Prostate gland (tissue), 2 donors: ENCODE measurements at regions of chr1 and their contacts with region 1.

Region 1: GRCh38 chr1:77683160-77684148 is 996 bp upstream of the ZZZ3 start:
- DNase-seq: peak; percentile 90
- H3K4me3 ChIP-seq: peak overlapping the region; percentile 59 to 86
- H3K27ac ChIP-seq: peak overlapping the region; percentile 84 to 94
- H3K4me1 ChIP-seq: no peaks in the 10 kb centered on the region
- H3K27me3 ChIP-seq: no peaks in the 10 kb centered on the region
- CTCF ChIP-seq: peak; percentile 66 to 96 (median 86)
- POLR2A ChIP-seq: peak; percentile 41

Region 2: GRCh38 chr1:77533660-77534305 is 149.7 kb before region 1 on chr1:
- intact Hi-C with region 1: loop called (anchors 10 kb)
- DNase-seq: peak; percentile 44
- H3K4me3 ChIP-seq: no peak overlapping the region
- H3K27ac ChIP-seq: no peak overlapping the region
- H3K4me1 ChIP-seq: no peaks in the 10 kb centered on the region
- H3K27me3 ChIP-seq: no peaks in the 10 kb centered on the region
- CTCF ChIP-seq: peak; percentile 64 to 82 (median 74)
- POLR2A ChIP-seq: no peak

Region 3: GRCh38 chr1:78019018-78019417 is 335.6 kb after region 1 on chr1:
- intact Hi-C with region 1: no loop called
- DNase-seq: no peak
- H3K4me3 ChIP-seq: no peak overlapping the region
- H3K27ac ChIP-seq: no peak overlapping the region
- H3K4me1 ChIP-seq: no peaks in the 10 kb centered on the region
- H3K27me3 ChIP-seq: no peaks in the 10 kb centered on the region
- CTCF ChIP-seq: no peak
- POLR2A ChIP-seq: no peak